B cell (primary cell): ENCODE measurements at regions of chr19 and their contacts with region 1.

Region 1: GRCh38 chr19:35995048-35995993 is at the start of gene SDHAF1:
- DNase-seq: peak; percentile 93
- ATAC-seq: peak; percentile 96
- H3K4me3 ChIP-seq: peak within 1 kb of the TSS; percentile 60 to 79 (median 77)
- H3K4me3 Mint-ChIP-seq: peak within 1 kb of the TSS; percentile 97
- H3K27ac ChIP-seq: peak within 1 kb of the TSS; percentile 55 to 81
- H3K27ac Mint-ChIP-seq: peak within 1 kb of the TSS; percentile 96
- H3K4me1 ChIP-seq: peaks cover 18 to 25% of the 10 kb centered on the region in 2 donors
- H3K4me1 Mint-ChIP-seq: peaks cover 32% of the 10 kb centered on the region
- H3K27me3 ChIP-seq: no peaks in the 10 kb centered on the region
- H3K27me3 Mint-ChIP-seq: no peaks in the 10 kb centered on the region
- CTCF ChIP-seq: no peak
- total RNA-seq, gene SDHAF1: 24.2 and 24.6 TPM in 2 replicates

Region 2: GRCh38 chr19:36014029-36014924 is 19.0 kb after region 1 on chr19 and contains the start of gene ALKBH6:
- CTCF ChIA-PET with region 1: interaction called, 4 read pairs
- POLR2A ChIA-PET with region 1: interaction called, 6 read pairs
- intact Hi-C with region 1: loop called (anchors 1 kb)
- DNase-seq: peak; percentile 98
- ATAC-seq: peak; percentile 99
- H3K4me3 ChIP-seq: peak within 1 kb of the TSS; percentile 67 to 94 (median 72)
- H3K4me3 Mint-ChIP-seq: peak within 1 kb of the TSS; percentile 99
- H3K27ac ChIP-seq: peak within 1 kb of the TSS; percentile 70 to 86
- H3K27ac Mint-ChIP-seq: peak within 1 kb of the TSS; percentile 93
- H3K4me1 ChIP-seq: peaks cover 16 to 21% of the 10 kb centered on the region in 2 donors
- H3K4me1 Mint-ChIP-seq: peaks cover 28% of the 10 kb centered on the region
- H3K27me3 ChIP-seq: peaks cover 0 to 6% (median 0%) of the 10 kb centered on the region in 4 experiments
- H3K27me3 Mint-ChIP-seq: no peaks in the 10 kb centered on the region
- CTCF ChIP-seq: no peak
- total RNA-seq, gene ALKBH6: 49.4 and 54.5 TPM in 2 replicates

Region 3: DNA sequence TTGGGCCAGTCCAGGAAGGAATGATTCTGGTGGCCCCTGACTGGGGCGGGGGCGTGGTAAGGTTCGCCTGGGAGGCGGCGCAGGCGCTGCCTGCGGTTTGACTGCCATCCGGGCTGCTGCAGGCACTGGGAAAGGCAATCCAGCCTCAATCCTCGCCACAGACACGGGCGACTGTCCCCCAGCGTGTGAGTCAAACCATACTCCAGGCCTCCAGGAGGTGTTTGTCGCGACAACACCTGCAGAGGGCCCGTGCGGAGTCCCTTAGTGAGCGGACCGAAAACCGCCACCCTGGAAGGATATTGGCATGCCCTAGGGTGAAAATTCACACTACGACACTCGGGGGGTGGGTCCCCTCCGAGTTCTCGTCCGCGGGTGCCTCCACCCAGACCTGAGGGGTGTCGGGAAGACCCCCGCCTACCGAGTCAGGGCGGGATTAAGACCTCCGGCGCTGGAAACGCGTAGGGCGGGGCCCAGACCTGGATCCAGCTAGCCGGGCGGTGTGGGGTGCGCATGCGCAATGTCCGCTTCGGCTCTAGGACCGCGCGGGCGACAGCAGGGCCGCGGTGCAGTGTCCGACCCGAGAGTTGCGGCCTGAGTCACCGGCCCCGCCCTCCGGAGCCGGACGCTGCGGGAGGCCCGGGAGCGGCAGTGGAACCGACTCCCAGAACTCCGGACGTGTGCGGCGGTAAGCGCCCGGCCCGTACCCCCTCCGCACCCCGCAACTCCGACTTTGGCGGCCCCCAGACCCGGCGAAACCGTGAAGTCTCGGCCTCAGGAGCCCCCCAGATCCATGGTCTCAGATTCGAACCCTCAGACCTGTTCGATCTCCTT is 144.4 kb after region 1 on chr19 and contains the start of gene CAPNS1:
- CTCF ChIA-PET with region 1: no interaction called
- POLR2A ChIA-PET with region 1: no interaction called
- intact Hi-C with region 1: loop called (anchors 1 kb)
- DNase-seq: peak; percentile 95
- ATAC-seq: peak; percentile 76
- H3K4me3 ChIP-seq: peak within 1 kb of the TSS; percentile 76 to 99 (median 89)
- H3K4me3 Mint-ChIP-seq: peak within 1 kb of the TSS; percentile 96
- H3K27ac ChIP-seq: peak within 1 kb of the TSS; percentile 81 to 85
- H3K27ac Mint-ChIP-seq: peak within 1 kb of the TSS; percentile 94
- H3K4me1 ChIP-seq: peaks cover 4 to 14% of the 10 kb centered on the region in 2 donors
- H3K4me1 Mint-ChIP-seq: peaks cover 15% of the 10 kb centered on the region
- H3K27me3 ChIP-seq: no peaks in the 10 kb centered on the region
- H3K27me3 Mint-ChIP-seq: no peaks in the 10 kb centered on the region
- CTCF ChIP-seq: peak; percentile 37
- total RNA-seq, gene CAPNS1: 294 and 296 TPM in 2 replicates

Region 4: GRCh38 chr19:36225219-36225892 is 230.0 kb after region 1 on chr19:
- CTCF ChIA-PET with region 1: no interaction called
- POLR2A ChIA-PET with region 1: no interaction called
- intact Hi-C with region 1: no loop called
- DNase-seq: no peak
- ATAC-seq: no peak
- H3K4me3 ChIP-seq: no peak overlapping the region
- H3K4me3 Mint-ChIP-seq: peak overlapping the region; percentile 6
- H3K27ac ChIP-seq: peak overlapping the region in 1 of 2 donors; percentile 56
- H3K27ac Mint-ChIP-seq: peak overlapping the region; percentile 39
- H3K4me1 ChIP-seq: peaks cover 6 to 7% of the 10 kb centered on the region in 2 donors
- H3K4me1 Mint-ChIP-seq: peaks cover 18% of the 10 kb centered on the region
- H3K27me3 ChIP-seq: no peaks in the 10 kb centered on the region
- H3K27me3 Mint-ChIP-seq: no peaks in the 10 kb centered on the region
- CTCF ChIP-seq: no peak